Posterior vena cava (tissue), 2 donors: ENCODE measurements at regions of chr7 and their contacts with region 1.

Region 1: GRCh38 chr7:156768683-156769466 is 124.1 kb downstream of the LMBR1 start:
- DNase-seq: no peak

Region 2: GRCh38 chr7:155796381-155797261 is 972.3 kb before region 1 on chr7:
- intact Hi-C with region 1: loop called in 1 of 2 experiments (anchors 5 kb)
- DNase-seq: peak; percentile 89